ENCODE measurements at regions of chr3 and their contacts with region 1.

Region 1: GRCh38 chr3:81910244-81910852 is 148.9 kb upstream of the GBE1 start:
- DNase-seq: peak; percentile 69
- H3K4me3 Mint-ChIP-seq: no peak overlapping the region
- H3K27ac Mint-ChIP-seq: no peak overlapping the region
- H3K4me1 Mint-ChIP-seq: no peaks in the 10 kb centered on the region
- H3K27me3 Mint-ChIP-seq: no peaks in the 10 kb centered on the region
- CTCF ChIP-seq: peak; percentile 67

Region 2: GRCh38 chr3:81581966-81582599 is 328.3 kb before region 1 on chr3:
- CTCF ChIA-PET with region 1: interaction called, 3 read pairs
- POLR2A ChIA-PET with region 1: no interaction called
- intact Hi-C with region 1: loop called (anchors 1 kb)
- DNase-seq: peak; percentile 55
- H3K4me3 Mint-ChIP-seq: no peak overlapping the region
- H3K27ac Mint-ChIP-seq: no peak overlapping the region
- H3K4me1 Mint-ChIP-seq: peaks cover 6% of the 10 kb centered on the region
- H3K27me3 Mint-ChIP-seq: no peaks in the 10 kb centered on the region
- CTCF ChIP-seq: peak; percentile 58

Region 3: DNA sequence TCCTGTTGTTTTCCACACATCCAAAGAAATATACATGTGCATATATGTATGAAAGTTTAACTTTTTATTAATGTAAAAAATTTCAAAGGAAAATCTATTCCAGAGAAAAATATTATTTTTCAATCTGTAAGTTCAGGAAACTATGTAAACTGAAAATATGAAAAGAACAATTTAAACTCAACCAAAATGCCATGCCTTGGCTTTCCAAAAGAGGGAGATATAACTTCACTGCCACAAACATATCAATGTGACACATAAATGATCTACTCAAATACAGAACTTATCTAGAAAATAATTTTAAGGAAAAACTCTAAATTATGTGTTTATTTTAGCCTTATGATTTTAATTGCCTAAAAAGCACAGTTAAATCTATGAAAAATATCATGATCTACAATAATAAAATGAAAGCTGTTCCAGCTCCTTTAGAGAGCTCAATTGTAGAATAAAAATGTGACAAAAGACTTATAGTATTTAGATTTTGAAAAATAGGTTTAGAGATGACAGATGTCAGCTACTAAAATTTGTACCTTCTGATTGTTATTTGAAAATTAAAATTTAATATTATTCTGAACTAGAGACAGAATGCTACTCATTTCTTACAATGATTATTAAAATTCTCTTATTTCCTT is 243.7 kb before region 1 on chr3:
- CTCF ChIA-PET with region 1: interaction called, 10 read pairs
- POLR2A ChIA-PET with region 1: no interaction called
- intact Hi-C with region 1: loop called (anchors 1 kb)
- DNase-seq: peak; percentile 39
- H3K4me3 Mint-ChIP-seq: no peak overlapping the region
- H3K27ac Mint-ChIP-seq: no peak overlapping the region
- H3K4me1 Mint-ChIP-seq: no peaks in the 10 kb centered on the region
- H3K27me3 Mint-ChIP-seq: no peaks in the 10 kb centered on the region
- CTCF ChIP-seq: peak; percentile 67

Region 4: DNA sequence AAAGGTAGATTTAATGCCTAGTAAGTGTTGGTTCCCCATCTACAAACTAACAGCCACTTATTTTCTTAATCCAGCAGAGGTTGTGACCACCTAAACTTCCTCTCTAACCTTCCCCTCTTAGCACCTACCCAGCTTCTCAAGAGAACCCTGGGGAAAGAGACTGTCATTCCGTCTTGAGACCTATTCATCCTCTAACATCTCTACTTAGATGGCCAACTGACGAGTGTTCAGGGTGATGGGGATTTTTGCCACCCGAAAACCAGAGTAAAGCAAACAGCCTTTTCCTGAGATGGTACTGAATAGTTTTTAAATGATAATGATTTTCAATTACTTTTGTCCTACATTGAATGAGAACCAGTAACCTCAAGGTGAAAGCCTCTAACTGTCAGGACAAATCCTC is 139.6 kb before region 1 on chr3:
- CTCF ChIA-PET with region 1: no interaction called
- POLR2A ChIA-PET with region 1: no interaction called
- intact Hi-C with region 1: no loop called
- DNase-seq: no peak
- H3K4me3 Mint-ChIP-seq: no peak overlapping the region
- H3K27ac Mint-ChIP-seq: no peak overlapping the region
- H3K4me1 Mint-ChIP-seq: no peaks in the 10 kb centered on the region
- H3K27me3 Mint-ChIP-seq: no peaks in the 10 kb centered on the region
- CTCF ChIP-seq: no peak

Region 5: DNA sequence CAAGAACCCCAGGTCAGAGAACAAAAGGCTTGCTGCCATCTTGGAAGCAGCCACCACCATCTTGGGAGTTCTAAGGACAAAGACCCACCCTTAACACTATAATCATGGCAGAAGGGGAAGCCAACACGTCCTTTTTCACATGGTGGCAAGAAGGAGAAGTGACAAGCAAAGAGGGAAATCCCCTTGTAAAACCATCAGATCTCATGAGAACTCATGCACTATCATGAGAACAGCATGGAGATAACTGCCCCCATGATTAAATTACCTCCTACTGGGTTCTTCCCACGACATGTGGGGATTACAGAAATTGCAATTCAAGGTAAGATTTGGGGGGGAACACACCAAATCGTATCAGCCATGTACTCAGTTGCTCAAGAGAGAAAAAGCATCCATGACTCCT is 127.8 kb before region 1 on chr3:
- CTCF ChIA-PET with region 1: no interaction called
- POLR2A ChIA-PET with region 1: no interaction called
- intact Hi-C with region 1: no loop called
- DNase-seq: no peak
- H3K4me3 Mint-ChIP-seq: no peak overlapping the region
- H3K27ac Mint-ChIP-seq: no peak overlapping the region
- H3K4me1 Mint-ChIP-seq: peaks cover 5% of the 10 kb centered on the region
- H3K27me3 Mint-ChIP-seq: no peaks in the 10 kb centered on the region
- CTCF ChIP-seq: no peak

Region 6: GRCh38 chr3:81894598-81894997 is 15.8 kb before region 1 on chr3:
- CTCF ChIA-PET with region 1: interaction called, 14 read pairs
- POLR2A ChIA-PET with region 1: no interaction called
- intact Hi-C with region 1: no loop called
- DNase-seq: no peak
- H3K4me3 Mint-ChIP-seq: no peak overlapping the region
- H3K27ac Mint-ChIP-seq: no peak overlapping the region
- H3K4me1 Mint-ChIP-seq: no peaks in the 10 kb centered on the region
- H3K27me3 Mint-ChIP-seq: no peaks in the 10 kb centered on the region
- CTCF ChIP-seq: no peak

Region 7: GRCh38 chr3:81920816-81921215 is 10.5 kb after region 1 on chr3:
- CTCF ChIA-PET with region 1: interaction called, 23 read pairs
- POLR2A ChIA-PET with region 1: no interaction called
- intact Hi-C with region 1: no loop called
- DNase-seq: no peak
- H3K4me3 Mint-ChIP-seq: no peak overlapping the region
- H3K27ac Mint-ChIP-seq: no peak overlapping the region
- H3K4me1 Mint-ChIP-seq: no peaks in the 10 kb centered on the region
- H3K27me3 Mint-ChIP-seq: no peaks in the 10 kb centered on the region
- CTCF ChIP-seq: no peak

Measured in MCF 10A (cell line).